ENCODE measurements at regions of chr12 and their contacts with region 1.

Region 1: GRCh38 chr12:113247123-113248055 is 26.1 kb downstream of the TPCN1 start:
- DNase-seq: peak; percentile 67
- H3K4me3 ChIP-seq: no peak overlapping the region
- H3K27ac ChIP-seq: peak overlapping the region; percentile 2
- H3K4me1 ChIP-seq: peaks cover 31% of the 10 kb centered on the region
- H3K27me3 ChIP-seq: no peaks in the 10 kb centered on the region
- CTCF ChIP-seq: no peak
- POLR2A ChIP-seq: no peak

Region 2: DNA sequence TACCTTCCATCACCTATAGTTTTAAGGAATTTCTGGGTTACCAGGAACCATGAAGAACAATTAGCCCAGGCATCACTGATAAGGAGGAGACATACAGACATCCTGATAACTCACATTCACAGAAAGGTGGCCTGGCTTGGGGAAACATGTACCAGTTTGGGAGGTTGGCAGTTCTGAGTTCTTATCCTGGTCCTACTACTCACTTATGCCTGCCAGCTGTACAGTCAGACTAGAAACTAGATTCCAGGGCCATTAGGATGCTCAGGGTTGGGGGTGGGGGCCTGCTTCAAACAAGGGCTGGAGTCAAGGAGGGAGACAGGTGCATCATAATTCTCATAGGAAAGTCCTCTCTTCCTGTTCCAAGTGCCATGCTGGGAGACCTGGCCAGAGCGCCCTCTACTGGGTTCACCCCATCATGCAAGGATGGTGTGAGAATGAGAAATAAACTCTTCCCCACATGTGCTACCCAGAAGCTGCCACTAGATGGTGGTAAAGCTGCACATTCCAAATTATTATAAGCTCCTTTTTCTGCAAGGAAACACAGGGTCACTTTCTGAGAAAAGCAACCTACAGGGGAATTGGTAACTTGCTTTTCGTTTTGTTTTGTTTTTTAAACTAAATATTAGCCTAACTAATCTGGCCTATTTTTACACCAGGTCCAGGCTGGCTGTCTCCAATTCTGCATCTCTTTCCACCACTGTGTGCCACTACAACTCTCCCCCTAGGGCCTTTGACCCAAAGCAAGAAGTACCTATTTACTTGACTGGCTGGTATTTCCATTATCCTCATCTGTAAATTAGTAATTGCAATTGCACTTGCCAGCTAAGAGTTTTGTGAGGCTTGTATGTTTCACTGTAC is 254.6 kb before region 1 on chr12:
- CTCF ChIA-PET with region 1: no interaction called
- POLR2A ChIA-PET with region 1: no interaction called
- dilution Hi-C with region 1: no loop called
- intact Hi-C with region 1: no loop called
- DNase-seq: peak; percentile 77
- H3K4me3 ChIP-seq: no peak overlapping the region
- H3K27ac ChIP-seq: no peak overlapping the region
- H3K4me1 ChIP-seq: no peaks in the 10 kb centered on the region
- H3K27me3 ChIP-seq: peaks cover 0 to under 1% of the 10 kb centered on the region in 2 experiments
- CTCF ChIP-seq: peak; percentile 92 to 99
- POLR2A ChIP-seq: no peak

Region 3: DNA sequence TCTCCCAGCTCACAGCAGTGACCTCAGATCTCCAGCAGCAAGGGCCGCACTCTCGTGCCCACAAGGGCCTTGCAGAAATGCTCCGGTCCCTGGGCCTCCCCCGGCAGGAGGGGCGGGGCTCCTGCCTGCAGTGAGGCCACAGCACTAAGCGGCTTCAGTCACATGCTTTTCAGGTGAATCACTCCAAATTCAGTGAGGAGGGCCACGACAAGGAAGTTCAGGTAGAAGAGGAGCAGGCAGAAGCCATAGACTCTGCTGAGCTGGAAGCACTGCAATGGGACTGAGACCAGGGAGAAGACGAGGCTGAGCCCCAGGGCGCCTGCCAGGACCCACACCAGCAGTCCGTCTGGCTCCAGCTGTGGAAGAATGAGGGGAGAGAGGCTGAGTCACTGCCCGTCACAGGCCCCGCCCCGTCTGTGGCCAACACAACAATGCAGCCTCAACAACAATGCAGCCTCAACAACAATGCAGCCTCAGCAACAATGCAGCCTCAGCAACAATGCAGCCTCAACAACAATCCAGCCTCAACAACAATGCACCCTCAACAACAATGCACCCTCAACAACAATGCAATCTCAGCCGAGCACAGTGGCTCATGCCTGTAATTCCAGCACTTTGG is 52.3 kb after region 1 on chr12:
- CTCF ChIA-PET with region 1: no interaction called
- POLR2A ChIA-PET with region 1: no interaction called
- dilution Hi-C with region 1: no loop called
- intact Hi-C with region 1: loop called (anchors 2 kb)
- DNase-seq: peak; percentile 58
- H3K4me3 ChIP-seq: no peak overlapping the region
- H3K27ac ChIP-seq: peak overlapping the region; percentile 65
- H3K4me1 ChIP-seq: peaks cover 6% of the 10 kb centered on the region
- H3K27me3 ChIP-seq: no peaks in the 10 kb centered on the region
- CTCF ChIP-seq: no peak
- POLR2A ChIP-seq: no peak

Measured in endothelial cell of umbilical vein (primary cell).